ENCODE measurements at regions of chr7 and their contacts with region 1.

Region 1: DNA sequence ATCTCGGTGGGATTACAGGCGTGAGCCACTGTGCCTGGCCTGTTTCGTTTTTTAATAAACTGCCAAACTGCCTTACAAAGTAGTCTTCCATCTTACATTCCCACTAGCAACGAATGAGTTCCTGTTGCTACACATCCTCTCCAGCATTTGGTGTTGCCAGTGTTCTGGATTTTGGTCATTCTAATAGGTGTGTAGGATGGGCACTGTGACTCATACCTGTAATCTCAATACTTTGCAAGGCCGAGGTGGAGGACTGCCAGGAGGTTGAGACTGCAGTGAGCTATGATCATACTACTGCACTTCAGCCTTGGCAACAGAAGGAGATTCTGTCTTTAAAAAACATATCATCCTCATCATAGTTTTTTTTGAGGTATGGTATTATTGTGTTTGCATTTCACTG is 21.4 kb upstream of the RSBN1L start:
- DNase-seq: no peak
- CTCF ChIP-seq: no peak

Region 2: GRCh38 chr7:77759294-77759889 is 84.5 kb after region 1 on chr7:
- in situ Hi-C with region 1: loop called (anchors 10 kb)
- DNase-seq: peak; percentile 26
- CTCF ChIP-seq: peak; percentile 79